Endothelial cell of umbilical vein (primary cell): ENCODE measurements at regions of chr4 and their contacts with region 1.

Region 1: DNA sequence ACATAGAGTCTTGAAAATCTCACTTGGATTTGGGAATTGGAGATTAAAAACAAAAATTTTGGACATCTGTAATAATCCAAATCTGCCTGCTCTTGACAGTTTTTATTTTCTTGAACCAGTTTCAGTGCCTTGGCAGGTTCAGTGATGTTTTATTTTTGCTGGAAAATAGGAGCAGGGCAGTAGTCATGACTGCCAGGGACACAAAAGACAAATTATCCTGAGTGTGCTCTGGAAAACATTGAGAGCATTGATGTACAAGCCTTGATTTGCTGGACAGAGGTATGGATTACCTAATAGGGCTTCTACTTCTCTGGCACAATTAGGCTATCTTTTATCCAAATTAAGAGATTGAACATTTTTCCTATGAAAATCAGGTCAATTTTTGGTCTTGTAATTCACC is 123.4 kb upstream of the SFRP2 start:
- DNase-seq: no peak
- H3K4me3 ChIP-seq: no peak overlapping the region
- H3K27ac ChIP-seq: no peak overlapping the region
- H3K4me1 ChIP-seq: no peaks in the 10 kb centered on the region
- H3K27me3 ChIP-seq: no peaks in the 10 kb centered on the region
- CTCF ChIP-seq: no peak
- POLR2A ChIP-seq: no peak

Region 2: GRCh38 chr4:153987291-153987690 is 75.0 kb after region 1 on chr4:
- CTCF ChIA-PET with region 1: no interaction called
- POLR2A ChIA-PET with region 1: no interaction called
- dilution Hi-C with region 1: no loop called
- intact Hi-C with region 1: loop called (anchors 2 kb)
- DNase-seq: no peak
- H3K4me3 ChIP-seq: no peak overlapping the region
- H3K27ac ChIP-seq: no peak overlapping the region
- H3K4me1 ChIP-seq: no peaks in the 10 kb centered on the region
- H3K27me3 ChIP-seq: no peaks in the 10 kb centered on the region
- CTCF ChIP-seq: no peak
- POLR2A ChIP-seq: no peak